SK-N-SH (cell line): ENCODE measurements at regions of chr11 and their contacts with region 1.

Region 1: GRCh38 chr11:70661761-70662501 is 263.6 kb downstream of the CTTN start:
- DNase-seq: peak; percentile 92
- H3K4me3 ChIP-seq: peak overlapping the region in 1 of 2 experiments; percentile 42; a peak in 2 of 4 replicates
- H3K27ac ChIP-seq: peak overlapping the region in 1 of 2 experiments; percentile 58; a peak in 2 of 4 replicates
- H3K4me1 ChIP-seq: peaks cover 0 to 26% of the 10 kb centered on the region in 2 experiments; a peak in 1 of 4 replicates
- H3K27me3 ChIP-seq: no peaks in the 10 kb centered on the region
- CTCF ChIP-seq: no peak
- EP300 ChIP-seq: no peak
- RAD21 ChIP-seq: no peak

Region 2: DNA sequence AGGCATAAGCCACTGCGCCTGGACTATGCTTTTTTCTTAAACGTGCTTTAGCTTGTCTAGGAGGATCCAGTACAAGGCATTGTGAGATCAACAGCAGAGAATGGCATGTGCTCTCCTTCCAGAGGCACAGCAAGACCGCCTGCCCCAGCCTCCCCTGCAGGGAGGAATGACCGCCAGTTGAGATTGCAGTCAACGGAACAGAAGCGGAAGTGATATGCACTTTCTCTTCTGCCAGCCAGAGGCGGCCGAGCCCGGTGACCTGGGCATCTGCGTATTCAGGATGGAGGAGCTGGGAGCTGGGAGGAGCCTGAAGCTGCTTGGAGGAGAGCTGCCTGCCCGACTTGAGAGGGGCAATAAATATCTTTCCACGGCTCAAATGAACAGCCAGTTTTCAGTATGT is 20.6 kb before region 1 on chr11:
- CTCF ChIA-PET with region 1: interaction called, 3 read pairs
- POLR2A ChIA-PET with region 1: interaction called, 15 read pairs
- DNase-seq: peak; percentile 88
- H3K4me3 ChIP-seq: no peak overlapping the region
- H3K27ac ChIP-seq: peak overlapping the region in 1 of 2 experiments; percentile 84; a peak in 2 of 4 replicates
- H3K4me1 ChIP-seq: peaks cover 0 to 33% of the 10 kb centered on the region in 2 experiments; a peak in 1 of 4 replicates
- H3K27me3 ChIP-seq: no peaks in the 10 kb centered on the region
- CTCF ChIP-seq: no peak
- EP300 ChIP-seq: 0 out of 4 replicates have a peak, but pooled peaks of 1 of the 2 experiments have one; percentile 37
- RAD21 ChIP-seq: no peak; the same call in 1 of the 2 replicates

Region 3: DNA sequence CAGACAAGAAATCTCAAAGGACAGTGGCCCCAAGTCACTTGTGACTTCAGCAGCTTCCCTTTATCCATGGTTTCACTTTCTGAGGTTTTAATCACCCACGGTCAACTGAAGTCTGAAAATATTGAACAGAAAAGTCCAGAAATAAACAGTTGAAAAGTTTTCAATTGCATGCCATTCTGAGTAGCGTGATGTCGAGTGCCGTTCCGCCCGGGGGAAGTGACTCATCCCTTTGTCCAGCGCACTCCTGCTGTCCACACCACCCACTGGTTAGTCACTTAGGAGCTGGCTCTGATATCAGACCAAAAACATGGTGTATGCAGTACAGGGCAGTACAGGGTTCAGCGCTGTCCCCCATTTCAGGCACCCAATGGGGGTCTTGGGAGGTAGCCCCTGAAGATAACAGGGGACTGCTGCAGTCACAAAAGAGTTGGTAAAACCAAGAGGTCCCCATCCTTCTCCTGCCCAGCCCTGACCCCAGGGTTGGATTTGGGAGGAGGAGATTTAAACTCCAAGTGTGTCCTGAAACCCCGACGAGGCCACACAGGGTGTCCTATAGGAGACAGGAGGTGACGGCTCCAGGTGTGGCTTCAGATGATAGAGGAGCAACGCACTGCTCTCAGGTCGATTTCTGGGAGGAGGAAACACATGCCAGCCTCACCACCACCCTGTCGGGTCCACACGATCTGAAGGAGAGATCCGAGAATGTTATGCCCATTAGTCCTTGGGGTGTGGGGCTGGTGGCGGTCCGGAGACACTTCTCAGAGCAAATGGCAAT is 126.5 kb after region 1 on chr11:
- CTCF ChIA-PET with region 1: no interaction called
- POLR2A ChIA-PET with region 1: no interaction called
- DNase-seq: no peak
- H3K4me3 ChIP-seq: no peak overlapping the region
- H3K27ac ChIP-seq: no peak overlapping the region
- H3K4me1 ChIP-seq: no peaks in the 10 kb centered on the region
- H3K27me3 ChIP-seq: no peaks in the 10 kb centered on the region
- CTCF ChIP-seq: no peak
- EP300 ChIP-seq: no peak
- RAD21 ChIP-seq: no peak